Dendritic cell treated with granulocyte-macrophage colony-stimulating factor and Interleukin-4, amounts not matched to agents 40 ng/mL and 50 ng/mL, for 4 days (primary cell): ENCODE measurements at regions of chr2 and their contacts with region 1.

Region 1: GRCh38 chr2:9423100-9423921 is at the starts of genes CPSF3 and ITGB1BP1:
- H3K4me3 Mint-ChIP-seq: no peak within 1 kb of the TSS
- H3K27ac Mint-ChIP-seq: peak within 1 kb of the TSS; percentile 96
- H3K4me1 Mint-ChIP-seq: peaks cover 24% of the 10 kb centered on the region
- H3K27me3 Mint-ChIP-seq: no peaks in the 10 kb centered on the region

Region 2: GRCh38 chr2:9474361-9474967 is 51.2 kb after region 1 on chr2 and contains the start of gene IAH1:
- intact Hi-C with region 1: loop called (anchors 2 kb)
- H3K4me3 Mint-ChIP-seq: peak within 1 kb of the TSS; percentile 82
- H3K27ac Mint-ChIP-seq: peak within 1 kb of the TSS; percentile 91
- H3K4me1 Mint-ChIP-seq: peaks cover 33% of the 10 kb centered on the region
- H3K27me3 Mint-ChIP-seq: no peaks in the 10 kb centered on the region